ENCODE measurements at regions of chr19 and their contacts with region 1.

Region 1: DNA sequence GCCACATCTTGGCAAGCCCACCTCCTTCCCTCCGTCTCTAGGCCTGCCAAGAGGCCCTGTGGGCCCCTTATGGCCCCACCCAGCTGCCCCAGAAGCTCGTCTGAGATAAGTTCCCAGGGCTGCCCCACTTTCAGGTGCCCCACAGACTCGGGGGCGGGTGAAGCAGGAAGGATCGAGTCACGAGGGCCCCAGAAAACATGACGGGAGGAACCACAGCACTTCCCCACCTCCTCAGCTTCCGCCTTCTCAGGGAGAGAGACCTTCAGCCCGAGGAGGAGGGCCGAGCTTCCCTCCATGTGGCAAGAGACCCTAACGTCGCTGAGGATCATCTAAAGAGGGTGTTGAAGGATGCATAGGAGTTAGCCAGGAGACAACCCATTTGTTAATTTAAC is 4.5 kb upstream of the IL12RB1 start:
- DNase-seq: peak; percentile 88
- H3K4me3 Mint-ChIP-seq: peak overlapping the region; percentile 15
- H3K27ac Mint-ChIP-seq: peak overlapping the region; percentile 98
- H3K4me1 Mint-ChIP-seq: peaks cover 64% of the 10 kb centered on the region
- H3K27me3 Mint-ChIP-seq: no peaks in the 10 kb centered on the region

Region 2: DNA sequence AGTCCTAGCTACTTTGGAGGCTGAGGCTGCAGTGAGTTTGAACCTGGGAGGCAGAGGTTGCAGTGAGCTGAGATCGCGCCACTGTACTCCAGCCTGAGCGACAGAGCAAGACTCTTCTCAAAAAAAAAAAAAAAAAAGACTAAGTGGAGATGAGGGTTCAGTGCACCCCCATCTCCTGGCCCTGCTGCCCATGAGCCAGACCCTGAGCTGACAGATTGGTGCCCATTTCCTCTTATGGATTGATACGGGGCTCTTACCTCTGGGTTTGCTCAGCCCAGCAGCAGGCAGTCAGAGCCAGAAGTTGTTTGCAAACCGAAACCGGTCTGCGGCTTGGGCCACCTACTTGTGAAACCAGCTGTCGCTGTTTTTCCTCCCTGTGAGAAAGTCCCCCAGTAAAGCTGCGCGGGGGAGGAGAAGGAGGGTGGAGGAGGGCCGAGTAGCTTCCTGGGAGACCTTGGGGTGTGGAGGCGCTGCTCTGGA is 46.3 kb before region 1 on chr19:
- CTCF ChIA-PET with region 1: interaction called, 3 read pairs
- POLR2A ChIA-PET with region 1: interaction called, 11 read pairs
- DNase-seq: peak; percentile 93
- H3K4me3 Mint-ChIP-seq: peak overlapping the region; percentile 35
- H3K27ac Mint-ChIP-seq: peak overlapping the region; percentile 71
- H3K4me1 Mint-ChIP-seq: peaks cover 33% of the 10 kb centered on the region
- H3K27me3 Mint-ChIP-seq: peaks cover 39% of the 10 kb centered on the region

Region 3: DNA sequence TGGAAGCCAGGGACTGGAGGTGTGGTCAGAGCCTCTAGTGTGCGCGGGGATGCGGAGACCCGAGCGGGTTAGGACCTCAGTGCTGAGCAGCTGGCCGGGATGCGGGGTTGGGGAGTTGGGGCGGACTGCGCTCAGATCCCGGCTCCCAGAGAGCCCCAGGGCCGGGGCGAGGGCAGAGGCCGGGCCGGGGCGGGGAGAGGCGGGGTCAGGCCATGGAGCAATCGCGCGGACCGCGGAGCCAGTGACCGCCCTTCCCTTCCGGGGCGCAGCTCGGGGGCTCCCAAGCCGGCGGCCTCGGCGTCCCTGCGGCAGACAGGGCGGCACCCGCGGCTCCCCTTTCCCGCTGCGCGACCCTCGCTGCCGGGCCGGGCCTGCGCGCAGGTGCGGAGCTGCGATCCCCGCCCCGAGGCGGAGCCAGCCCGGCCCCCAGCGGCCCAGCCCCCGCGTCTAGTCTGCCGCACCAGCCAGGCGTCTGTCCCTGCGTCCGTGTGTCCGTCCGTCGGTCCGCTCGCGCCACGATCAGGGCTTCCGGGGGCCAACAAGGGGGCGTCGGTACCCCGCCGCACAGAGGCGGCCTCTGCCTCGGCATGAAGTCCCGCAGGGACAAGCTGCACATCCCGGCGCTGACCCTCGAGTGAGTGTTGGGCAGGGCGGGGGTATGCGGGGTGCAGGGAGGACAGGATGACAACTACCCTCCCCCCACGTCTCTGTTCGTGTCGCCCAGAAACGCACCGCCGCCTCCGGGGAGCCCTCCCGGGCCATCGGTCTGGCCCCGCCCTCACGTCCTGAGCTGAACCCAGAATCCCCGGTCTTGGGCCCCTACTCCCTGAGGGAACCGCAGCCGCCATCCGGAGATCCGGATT is 18.8 kb after region 1 on chr19:
- CTCF ChIA-PET with region 1: interaction called, 24 read pairs
- POLR2A ChIA-PET with region 1: interaction called, 10 read pairs
- DNase-seq: peak; percentile 57
- H3K4me3 Mint-ChIP-seq: peak overlapping the region; percentile 69
- H3K27ac Mint-ChIP-seq: no peak overlapping the region
- H3K4me1 Mint-ChIP-seq: peaks cover 26% of the 10 kb centered on the region
- H3K27me3 Mint-ChIP-seq: peaks cover 6% of the 10 kb centered on the region

Measured in activated CD4-positive, alpha-beta memory T cell treated with anti-CD3 and anti-CD28 coated beads, Interleukin-2, amount 10 ng/mL, durations not matched to agents 7 days and 5 days (primary cell).